ENCODE measurements at regions of chr3 and their contacts with region 1.

Region 1: DNA sequence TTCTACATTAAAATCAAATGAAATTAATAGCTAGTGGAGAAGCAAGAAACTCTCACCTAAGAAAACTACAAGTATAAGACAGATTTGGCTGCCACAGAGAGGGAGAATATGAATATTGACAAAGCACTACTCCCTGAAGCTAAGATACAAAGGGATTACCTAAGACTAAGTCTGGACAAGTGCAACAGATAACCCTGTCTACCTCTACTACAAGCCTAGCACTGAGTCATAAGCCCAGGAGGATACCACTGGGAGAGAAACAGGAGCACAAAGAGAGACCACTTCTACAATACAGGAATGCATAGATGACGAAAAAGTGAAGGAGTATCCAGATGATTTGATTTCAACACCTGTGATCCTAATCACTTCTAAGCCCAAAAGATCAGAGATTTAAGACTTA is 10.4 kb downstream of the ATP13A4 start:
- DNase-seq: no peak
- H3K4me3 ChIP-seq: no peak overlapping the region
- H3K27ac ChIP-seq: no peak overlapping the region
- H3K4me1 ChIP-seq: no peaks in the 10 kb centered on the region
- H3K27me3 ChIP-seq: no peaks in the 10 kb centered on the region
- CTCF ChIP-seq: no peak
- POLR2A ChIP-seq: no peak

Region 2: GRCh38 chr3:193470710-193471109 is 73.6 kb before region 1 on chr3:
- intact Hi-C with region 1: no loop called
- DNase-seq: no peak
- H3K4me3 ChIP-seq: no peak overlapping the region
- H3K27ac ChIP-seq: no peak overlapping the region
- H3K4me1 ChIP-seq: no peaks in the 10 kb centered on the region
- H3K27me3 ChIP-seq: no peaks in the 10 kb centered on the region
- CTCF ChIP-seq: no peak
- POLR2A ChIP-seq: no peak

Region 3: GRCh38 chr3:193554811-193555210 is 10.5 kb after region 1 on chr3 and contains the start of gene ATP13A4:
- intact Hi-C with region 1: loop called (anchors 1 kb)
- DNase-seq: peak in 1 of 2 donors; percentile 40
- H3K4me3 ChIP-seq: peak within 1 kb of the TSS in 2 of 3 donors; percentile 40 to 51
- H3K27ac ChIP-seq: peak within 1 kb of the TSS; percentile 18 to 28
- H3K4me1 ChIP-seq: no peaks in the 10 kb centered on the region
- H3K27me3 ChIP-seq: no peaks in the 10 kb centered on the region
- CTCF ChIP-seq: no peak
- POLR2A ChIP-seq: no peak
- total RNA-seq, gene ATP13A4: 0.64 to 36.6 (median 6.2) TPM

Region 4: DNA sequence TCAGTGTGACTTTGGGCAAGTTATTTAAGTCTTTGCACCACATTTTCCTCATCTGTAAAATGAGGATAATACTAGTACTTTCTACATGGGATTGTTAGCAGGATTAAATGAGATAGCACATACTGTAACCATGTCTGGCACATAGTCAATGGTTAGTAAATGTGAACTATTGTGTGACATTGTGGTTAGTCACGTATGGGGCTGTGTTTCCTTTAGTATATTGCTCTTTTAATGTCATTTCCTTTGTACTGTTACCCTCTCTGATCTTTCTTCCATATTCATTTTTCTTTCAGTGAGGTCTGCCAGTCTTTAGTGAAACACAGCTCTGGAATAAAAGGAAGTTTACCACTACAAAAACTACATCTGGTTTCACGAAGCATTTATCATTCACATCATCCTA is 70.1 kb after region 1 on chr3:
- intact Hi-C with region 1: no loop called
- DNase-seq: no peak
- H3K4me3 ChIP-seq: no peak overlapping the region
- H3K27ac ChIP-seq: no peak overlapping the region
- H3K4me1 ChIP-seq: no peaks in the 10 kb centered on the region
- H3K27me3 ChIP-seq: no peaks in the 10 kb centered on the region
- CTCF ChIP-seq: no peak
- POLR2A ChIP-seq: no peak

Region 5: GRCh38 chr3:193857996-193858395 is 313.7 kb after region 1 on chr3:
- intact Hi-C with region 1: no loop called
- DNase-seq: peak in 1 of 2 donors; percentile 26
- H3K4me3 ChIP-seq: no peak overlapping the region
- H3K27ac ChIP-seq: no peak overlapping the region
- H3K4me1 ChIP-seq: no peaks in the 10 kb centered on the region
- H3K27me3 ChIP-seq: no peaks in the 10 kb centered on the region
- CTCF ChIP-seq: no peak
- POLR2A ChIP-seq: no peak